ENCODE measurements at regions of chr15 and their contacts with region 1.

Region 1: GRCh38 chr15:39786447-39787056 is 3.9 kb upstream of the FSIP1 start:
- DNase-seq: peak; percentile 82
- H3K4me3 ChIP-seq: no peak overlapping the region
- H3K27ac ChIP-seq: no peak overlapping the region
- H3K4me1 ChIP-seq: peaks cover 14% of the 10 kb centered on the region
- H3K27me3 ChIP-seq: no peaks in the 10 kb centered on the region
- CTCF ChIP-seq: peak; percentile 71

Region 2: DNA sequence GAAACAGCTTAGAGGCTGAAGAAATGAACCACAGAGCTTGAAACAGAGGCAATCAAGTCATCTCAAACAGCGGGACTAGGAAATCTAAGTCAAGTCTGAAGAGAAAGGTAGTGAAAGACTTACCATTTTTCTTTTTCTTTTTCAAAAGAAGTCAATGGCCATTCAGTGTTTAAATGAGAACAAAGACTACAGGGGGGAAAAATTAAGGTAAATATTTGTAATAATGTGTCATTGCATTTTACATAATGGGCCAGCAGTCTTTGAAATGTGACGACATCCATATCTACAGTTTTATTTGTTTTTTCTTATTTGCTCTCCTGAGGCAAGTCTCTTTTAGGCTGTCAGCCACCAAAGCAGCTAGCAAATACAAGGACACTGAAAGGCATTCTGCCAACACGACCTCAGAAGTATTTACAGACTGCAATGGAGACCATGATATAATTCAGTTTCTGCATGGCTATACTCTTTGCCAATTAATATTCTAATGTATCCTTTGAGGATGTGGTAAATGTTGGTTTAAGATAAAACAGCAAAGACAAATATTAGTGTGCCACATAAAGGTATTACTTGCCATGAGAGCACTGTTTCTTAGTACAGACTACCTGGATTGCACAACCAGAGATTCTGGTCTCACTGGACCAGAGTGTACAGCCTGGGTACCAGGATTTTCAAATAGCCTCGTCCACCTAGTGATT is 512.7 kb before region 1 on chr15:
- CTCF ChIA-PET with region 1: no interaction called
- POLR2A ChIA-PET with region 1: no interaction called
- intact Hi-C with region 1: no loop called
- DNase-seq: no peak
- H3K4me3 ChIP-seq: no peak overlapping the region
- H3K27ac ChIP-seq: no peak overlapping the region
- H3K4me1 ChIP-seq: no peaks in the 10 kb centered on the region
- H3K27me3 ChIP-seq: no peaks in the 10 kb centered on the region
- CTCF ChIP-seq: no peak

Region 3: DNA sequence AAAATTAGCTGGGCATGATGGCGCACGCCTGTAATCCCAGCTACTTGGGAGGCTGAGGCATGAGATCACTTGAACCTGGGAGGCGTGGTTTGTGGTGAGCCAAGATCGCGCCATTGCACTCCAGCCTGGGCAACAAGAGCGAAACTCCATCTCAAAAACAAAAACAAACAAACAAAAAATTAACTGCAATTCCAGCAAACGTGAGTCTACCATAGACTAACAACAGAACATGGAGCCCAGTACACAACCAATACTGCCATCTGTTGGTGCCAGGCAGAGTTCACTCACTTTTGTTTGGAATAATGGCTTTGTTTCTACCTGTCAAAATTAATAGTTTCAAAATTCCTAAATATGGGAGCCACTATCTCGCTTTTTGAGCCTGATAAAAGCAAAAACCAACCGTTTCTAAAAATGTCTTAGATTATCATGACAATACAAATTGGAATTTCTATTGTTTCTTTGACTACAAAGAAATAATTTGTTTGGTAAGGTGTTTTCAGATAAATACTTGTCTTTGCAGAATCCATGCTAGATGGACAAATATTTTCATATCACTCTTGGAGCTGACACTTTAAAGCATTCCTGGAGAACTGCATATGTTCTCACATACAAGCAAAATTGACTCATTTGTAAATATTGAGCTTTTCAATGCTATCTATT is 88.5 kb after region 1 on chr15:
- CTCF ChIA-PET with region 1: interaction called, 3 read pairs
- POLR2A ChIA-PET with region 1: no interaction called
- intact Hi-C with region 1: loop called (anchors 1 kb)
- DNase-seq: peak; percentile 60
- H3K4me3 ChIP-seq: no peak overlapping the region
- H3K27ac ChIP-seq: no peak overlapping the region
- H3K4me1 ChIP-seq: no peaks in the 10 kb centered on the region
- H3K27me3 ChIP-seq: no peaks in the 10 kb centered on the region
- CTCF ChIP-seq: peak; percentile 80

Region 4: DNA sequence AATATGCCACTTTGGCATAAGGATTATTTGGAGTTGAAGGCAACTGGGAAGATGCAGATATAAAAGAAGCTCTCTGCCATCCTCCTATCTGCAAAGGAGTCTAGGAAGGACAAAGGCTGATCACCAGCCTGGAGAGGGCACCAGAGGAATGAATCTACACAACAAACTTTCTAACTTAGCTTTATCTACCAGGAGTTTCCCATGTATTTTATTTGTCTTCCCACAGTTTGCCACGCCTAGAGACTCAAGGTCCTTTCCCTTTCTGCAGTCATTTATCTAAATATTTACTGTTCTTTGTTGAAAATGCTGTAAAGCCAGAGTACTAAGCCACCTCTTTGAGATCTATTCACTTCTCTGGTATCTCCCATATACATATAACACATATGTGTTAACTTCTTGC is 101.3 kb after region 1 on chr15:
- CTCF ChIA-PET with region 1: no interaction called
- POLR2A ChIA-PET with region 1: no interaction called
- intact Hi-C with region 1: no loop called
- DNase-seq: peak; percentile 65
- H3K4me3 ChIP-seq: no peak overlapping the region
- H3K27ac ChIP-seq: no peak overlapping the region
- H3K4me1 ChIP-seq: peaks cover 6% of the 10 kb centered on the region
- H3K27me3 ChIP-seq: no peaks in the 10 kb centered on the region
- CTCF ChIP-seq: peak; percentile 55

Region 5: DNA sequence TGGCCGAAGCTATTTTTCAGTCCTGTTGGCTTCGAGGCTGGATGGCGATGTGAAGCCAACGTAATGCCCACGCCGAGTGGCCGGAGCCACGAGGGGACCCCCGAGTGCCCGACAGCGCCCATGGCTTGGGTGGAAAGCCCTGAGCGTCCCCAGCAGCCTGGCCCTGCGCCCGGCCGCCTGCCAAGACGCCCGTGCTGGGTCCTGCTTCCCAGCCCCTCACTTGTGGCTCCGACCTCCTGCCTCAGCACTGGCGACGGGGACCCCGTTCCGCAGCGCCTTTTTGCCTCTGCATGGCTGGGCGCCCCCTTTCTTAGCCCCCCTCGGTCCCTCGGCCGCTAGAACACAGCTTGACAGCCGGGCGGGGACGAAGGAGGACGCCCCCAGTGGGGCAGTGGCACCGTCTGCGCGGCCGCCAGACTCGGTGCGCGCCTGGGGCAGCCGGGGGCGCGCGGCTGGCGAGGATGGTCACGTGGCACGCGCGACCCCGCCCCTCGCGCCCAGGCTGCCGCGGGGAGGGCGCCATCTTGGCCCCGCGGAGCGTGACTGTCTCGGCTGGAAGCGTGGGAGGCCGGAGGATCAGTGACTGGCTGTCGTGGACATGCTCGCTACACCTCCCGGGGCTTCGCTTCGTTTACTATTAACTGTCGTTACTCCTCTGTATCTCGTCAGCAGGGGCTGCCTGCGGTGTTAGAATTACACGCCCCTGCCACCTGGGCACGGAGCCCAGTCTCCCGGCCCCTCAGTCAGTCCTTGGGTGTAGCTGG is 134.1 kb after region 1 on chr15:
- CTCF ChIA-PET with region 1: no interaction called
- POLR2A ChIA-PET with region 1: no interaction called
- intact Hi-C with region 1: loop called (anchors 5 kb)
- DNase-seq: peak; percentile 90
- H3K4me3 ChIP-seq: peak overlapping the region; percentile 58
- H3K27ac ChIP-seq: peak overlapping the region; percentile 25
- H3K4me1 ChIP-seq: peaks cover 16% of the 10 kb centered on the region
- H3K27me3 ChIP-seq: peaks cover 25% of the 10 kb centered on the region
- CTCF ChIP-seq: 0 out of 2 replicates have a peak, but pooled peaks have one; percentile 9

Region 6: DNA sequence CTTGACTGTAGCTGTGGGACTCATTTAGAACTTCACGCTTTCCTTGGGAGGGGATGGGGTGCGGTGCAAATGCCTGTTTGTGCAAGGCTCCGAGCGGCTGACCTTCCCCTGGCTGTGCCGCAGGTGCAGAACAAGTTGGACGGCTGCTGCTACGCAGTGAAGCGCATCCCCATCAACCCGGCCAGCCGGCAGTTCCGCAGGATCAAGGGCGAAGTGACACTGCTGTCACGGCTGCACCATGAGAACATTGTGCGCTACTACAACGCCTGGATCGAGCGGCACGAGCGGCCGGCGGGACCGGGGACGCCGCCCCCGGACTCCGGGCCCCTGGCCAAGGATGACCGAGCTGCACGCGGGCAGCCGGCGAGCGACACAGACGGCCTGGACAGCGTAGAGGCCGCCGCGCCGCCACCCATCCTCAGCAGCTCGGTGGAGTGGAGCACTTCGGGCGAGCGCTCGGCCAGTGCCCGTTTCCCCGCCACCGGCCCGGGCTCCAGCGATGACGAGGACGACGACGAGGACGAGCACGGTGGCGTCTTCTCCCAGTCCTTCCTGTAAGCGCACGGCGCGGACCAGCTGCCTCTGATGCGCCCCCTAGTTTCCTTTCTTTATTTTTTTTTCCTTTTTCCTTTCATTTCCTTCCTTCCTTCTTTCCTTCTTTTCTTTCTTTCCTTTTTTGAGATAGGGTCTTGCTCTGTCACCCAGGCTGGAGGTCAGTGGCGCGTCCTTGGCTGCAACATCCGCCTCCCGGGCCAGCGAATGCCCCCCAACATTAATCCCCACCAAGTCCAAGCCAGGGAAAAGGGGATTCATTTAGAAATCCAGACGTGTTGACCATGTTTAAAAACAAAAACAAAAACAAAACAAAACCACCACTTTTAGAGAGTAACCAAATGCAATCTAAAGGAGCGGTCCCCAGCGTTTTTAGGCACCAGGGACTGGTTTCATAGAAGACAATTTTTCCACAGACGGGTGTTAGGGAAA is 190.0 kb after region 1 on chr15:
- CTCF ChIA-PET with region 1: no interaction called
- POLR2A ChIA-PET with region 1: no interaction called
- intact Hi-C with region 1: loop called (anchors 5 kb)
- DNase-seq: peak; percentile 84
- H3K4me3 ChIP-seq: peak overlapping the region; percentile 58
- H3K27ac ChIP-seq: peak overlapping the region; percentile 44
- H3K4me1 ChIP-seq: peaks cover 13% of the 10 kb centered on the region
- H3K27me3 ChIP-seq: no peaks in the 10 kb centered on the region
- CTCF ChIP-seq: peak; percentile 86

Region 7: GRCh38 chr15:40038638-40039543 is 252.3 kb after region 1 on chr15 and contains the start of gene SRP14:
- CTCF ChIA-PET with region 1: no interaction called
- POLR2A ChIA-PET with region 1: no interaction called
- intact Hi-C with region 1: loop called (anchors 5 kb)
- DNase-seq: peak; percentile 95
- H3K4me3 ChIP-seq: peak within 1 kb of the TSS; percentile 80
- H3K27ac ChIP-seq: peak within 1 kb of the TSS; percentile 92
- H3K4me1 ChIP-seq: peaks cover 8% of the 10 kb centered on the region
- H3K27me3 ChIP-seq: no peaks in the 10 kb centered on the region
- CTCF ChIP-seq: no peak
- total RNA-seq, gene SRP14: 272 and 274 TPM in 2 replicates